Posterior cingulate gyrus (tissue), 11 donors: ENCODE measurements at regions of chr3 and their contacts with region 1.

Region 1: GRCh38 chr3:151227807-151228665 is 25.0 kb upstream of the GPR171 start:
- DNase-seq: peak; percentile 32 to 95 (median 79)

Region 2: GRCh38 chr3:151168269-151169094 is 59.6 kb before region 1 on chr3:
- intact Hi-C with region 1: loop called (anchors 10 kb)
- DNase-seq: peak; percentile 34 to 94 (median 73)

Region 3: GRCh38 chr3:151248772-151249337 is 20.8 kb after region 1 on chr3:
- intact Hi-C with region 1: no loop called
- DNase-seq: no peak

Region 4: DNA sequence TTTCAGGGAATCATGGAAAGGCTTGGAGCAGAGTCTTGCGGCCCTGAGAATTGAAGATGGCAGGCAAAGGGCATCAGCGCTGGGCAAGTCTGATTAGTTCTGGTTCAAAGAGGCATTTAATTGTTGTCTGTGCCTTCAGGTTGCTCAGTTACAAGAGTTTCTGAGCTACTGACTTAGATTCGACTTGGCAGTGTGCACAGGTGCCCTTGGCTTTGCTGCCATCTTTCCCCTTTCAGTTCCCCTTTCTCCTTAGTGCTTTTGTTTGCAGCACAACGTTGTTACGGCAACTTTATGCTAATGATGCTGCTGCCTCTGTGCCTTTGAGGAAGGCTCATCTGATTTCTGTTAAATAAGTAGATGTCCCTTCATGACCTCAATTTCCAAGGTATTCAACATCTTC is 37.8 kb after region 1 on chr3:
- intact Hi-C with region 1: no loop called
- DNase-seq: no peak

Region 5: DNA sequence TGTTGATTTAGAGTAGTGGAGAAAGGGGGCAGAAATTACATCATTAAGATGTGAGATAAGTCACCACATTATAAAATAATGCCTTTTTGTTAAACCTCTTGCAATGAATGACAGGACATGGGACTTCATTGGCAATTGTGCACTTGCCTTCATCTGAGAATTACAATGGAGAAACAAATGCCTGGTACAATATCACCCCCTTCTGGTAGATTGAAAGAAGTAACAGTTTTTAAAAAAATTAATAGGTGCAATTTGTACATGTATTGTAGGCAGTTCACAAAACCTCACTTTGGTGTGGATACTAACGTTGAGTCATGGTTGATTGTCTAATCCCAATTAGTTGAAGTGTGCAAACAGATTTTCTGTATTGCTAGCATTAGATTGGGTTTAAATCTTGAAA is 54.9 kb after region 1 on chr3:
- intact Hi-C with region 1: loop called (anchors 1 kb)
- DNase-seq: no peak

Region 6: GRCh38 chr3:151327571-151328198 is 99.6 kb after region 1 on chr3:
- intact Hi-C with region 1: loop called (anchors 5 kb)
- DNase-seq: no peak

Region 7: DNA sequence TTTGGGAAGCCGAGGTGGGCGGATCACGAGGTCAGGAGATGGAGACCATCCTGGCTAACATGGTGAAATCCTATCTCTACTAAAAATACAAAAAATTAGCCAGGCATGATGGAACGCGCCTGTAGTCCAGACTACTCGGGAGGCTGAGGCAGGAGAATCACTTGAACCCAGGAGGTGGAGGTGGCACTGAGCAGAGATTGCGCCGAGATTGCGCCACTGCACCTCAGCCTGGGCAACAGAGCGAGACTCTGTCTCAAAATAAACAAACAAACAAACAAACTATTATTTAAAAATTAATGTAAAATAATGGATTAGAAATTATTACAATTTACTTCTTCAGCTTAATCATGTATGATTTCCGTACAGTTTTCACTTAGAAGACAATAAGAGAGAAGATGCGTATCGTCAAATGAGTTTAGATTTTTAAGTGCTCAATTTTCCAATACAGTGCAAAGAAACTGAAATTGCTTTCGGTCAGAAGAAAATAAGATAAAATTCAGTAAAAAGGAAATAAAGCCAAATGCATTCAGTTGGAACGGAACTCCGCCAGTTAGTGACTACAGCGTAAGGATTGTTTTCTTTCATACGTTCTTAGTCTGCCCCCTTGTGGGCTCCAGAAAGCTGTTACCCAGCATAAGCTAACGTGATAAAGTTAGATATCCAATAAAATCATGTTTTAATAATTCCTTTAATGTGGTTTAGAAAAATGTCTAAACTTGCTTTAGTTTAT is 610.7 kb after region 1 on chr3:
- intact Hi-C with region 1: loop called (anchors 2 kb)
- DNase-seq: peak in 5 of 10 donors; percentile 18 to 71 (median 46)